ENCODE measurements at regions of chr4 and their contacts with region 1.

Region 1: DNA sequence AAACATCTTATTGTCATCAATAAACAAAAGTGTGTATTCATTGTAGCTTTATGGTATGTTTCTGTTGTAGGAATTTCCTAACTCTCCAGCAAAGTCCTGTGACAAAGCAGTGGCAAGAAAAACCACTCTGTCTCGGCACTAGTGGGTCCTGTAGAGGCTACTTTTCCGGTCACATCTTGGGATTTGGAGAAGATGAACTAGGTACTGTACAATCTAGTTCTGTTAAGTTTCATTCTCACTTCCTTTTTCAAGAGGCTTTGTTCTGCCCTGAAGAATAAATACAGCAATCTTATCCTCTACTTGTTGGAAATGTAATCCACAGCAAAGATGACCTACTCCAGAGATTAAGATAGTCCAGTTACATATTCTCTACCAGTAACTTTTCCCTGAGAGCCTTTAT is 69.3 kb downstream of the HHIP start:
- DNase-seq: no peak
- H3K4me3 ChIP-seq: no peak overlapping the region
- CTCF ChIP-seq: no peak
- POLR2A ChIP-seq: no peak

Region 2: GRCh38 chr4:143634763-143635162 is 1080.5 kb before region 1 on chr4:
- intact Hi-C with region 1: loop called (anchors 5 kb)
- DNase-seq: no peak
- H3K4me3 ChIP-seq: no peak overlapping the region
- CTCF ChIP-seq: no peak
- POLR2A ChIP-seq: no peak

Region 3: GRCh38 chr4:145635630-145636029 is 920.4 kb after region 1 on chr4:
- intact Hi-C with region 1: no loop called
- DNase-seq: no peak
- H3K4me3 ChIP-seq: no peak overlapping the region
- CTCF ChIP-seq: no peak
- POLR2A ChIP-seq: no peak

Measured in lower leg skin (tissue), 4 donors.